Endothelial cell of umbilical vein (primary cell): ENCODE measurements at regions of chr6 and their contacts with region 1.

Region 1: GRCh38 chr6:2634139-2634964 is 116.4 kb downstream of the MYLK4 start:
- DNase-seq: peak; percentile 93
- H3K4me3 ChIP-seq: peak overlapping the region in 2 of 3 experiments; percentile 13 to 15
- H3K27ac ChIP-seq: peak overlapping the region; percentile 44
- H3K4me1 ChIP-seq: peaks cover 15% of the 10 kb centered on the region
- H3K27me3 ChIP-seq: no peaks in the 10 kb centered on the region
- CTCF ChIP-seq: peak; percentile 98 to 99
- POLR2A ChIP-seq: no peak

Region 2: DNA sequence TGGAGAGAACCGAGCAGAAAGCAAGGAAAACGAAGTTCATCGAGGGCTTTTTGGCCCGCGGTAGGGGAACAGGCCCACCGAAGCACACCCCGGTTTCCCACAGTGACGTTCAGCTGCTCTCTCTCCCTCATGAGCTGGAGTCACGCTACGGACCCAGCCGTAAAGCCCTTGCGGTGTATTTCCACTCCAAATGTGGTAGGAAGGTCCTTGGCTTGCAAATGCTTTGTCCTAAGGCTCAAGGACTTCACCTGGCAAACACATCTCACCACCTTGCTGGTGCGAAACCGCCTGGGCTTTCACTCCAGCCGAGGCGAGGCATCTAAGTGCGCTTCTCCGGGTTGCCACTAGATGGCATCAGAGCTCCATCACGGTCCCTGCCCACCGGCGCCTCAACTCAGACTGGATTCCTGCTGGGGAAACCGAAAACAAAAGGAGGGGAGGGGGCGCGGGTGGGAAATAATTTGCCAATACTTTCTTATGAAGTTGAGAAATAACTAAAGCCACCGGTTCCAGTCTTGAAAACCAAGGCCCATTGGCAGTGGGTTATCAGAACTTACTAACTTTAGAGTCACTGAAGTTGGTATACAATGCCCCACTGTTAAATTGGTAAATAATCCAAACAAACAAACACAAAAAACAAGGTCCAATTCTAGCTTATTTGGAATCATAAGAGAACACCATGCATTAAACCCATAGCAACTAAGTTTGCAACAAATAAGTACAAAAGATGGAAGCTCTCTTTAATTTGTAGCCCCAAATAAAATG is 1038.1 kb before region 1 on chr6:
- CTCF ChIA-PET with region 1: interaction called, 80 read pairs
- POLR2A ChIA-PET with region 1: no interaction called
- dilution Hi-C with region 1: no loop called
- intact Hi-C with region 1: loop called (anchors 1 kb)
- DNase-seq: peak; percentile 58
- H3K4me3 ChIP-seq: no peak overlapping the region
- H3K27ac ChIP-seq: no peak overlapping the region
- H3K4me1 ChIP-seq: no peaks in the 10 kb centered on the region
- H3K27me3 ChIP-seq: peaks cover 1 to 2% of the 10 kb centered on the region in 2 experiments
- CTCF ChIP-seq: peak; percentile 81 to 93
- POLR2A ChIP-seq: no peak

Region 3: GRCh38 chr6:1767481-1768251 is 866.7 kb before region 1 on chr6:
- CTCF ChIA-PET with region 1: no interaction called
- POLR2A ChIA-PET with region 1: no interaction called
- dilution Hi-C with region 1: no loop called
- intact Hi-C with region 1: loop called (anchors 5 kb)
- DNase-seq: peak; percentile 38
- H3K4me3 ChIP-seq: no peak overlapping the region
- H3K27ac ChIP-seq: no peak overlapping the region
- H3K4me1 ChIP-seq: peaks cover 53% of the 10 kb centered on the region
- H3K27me3 ChIP-seq: no peaks in the 10 kb centered on the region
- CTCF ChIP-seq: no peak
- POLR2A ChIP-seq: no peak

Region 4: DNA sequence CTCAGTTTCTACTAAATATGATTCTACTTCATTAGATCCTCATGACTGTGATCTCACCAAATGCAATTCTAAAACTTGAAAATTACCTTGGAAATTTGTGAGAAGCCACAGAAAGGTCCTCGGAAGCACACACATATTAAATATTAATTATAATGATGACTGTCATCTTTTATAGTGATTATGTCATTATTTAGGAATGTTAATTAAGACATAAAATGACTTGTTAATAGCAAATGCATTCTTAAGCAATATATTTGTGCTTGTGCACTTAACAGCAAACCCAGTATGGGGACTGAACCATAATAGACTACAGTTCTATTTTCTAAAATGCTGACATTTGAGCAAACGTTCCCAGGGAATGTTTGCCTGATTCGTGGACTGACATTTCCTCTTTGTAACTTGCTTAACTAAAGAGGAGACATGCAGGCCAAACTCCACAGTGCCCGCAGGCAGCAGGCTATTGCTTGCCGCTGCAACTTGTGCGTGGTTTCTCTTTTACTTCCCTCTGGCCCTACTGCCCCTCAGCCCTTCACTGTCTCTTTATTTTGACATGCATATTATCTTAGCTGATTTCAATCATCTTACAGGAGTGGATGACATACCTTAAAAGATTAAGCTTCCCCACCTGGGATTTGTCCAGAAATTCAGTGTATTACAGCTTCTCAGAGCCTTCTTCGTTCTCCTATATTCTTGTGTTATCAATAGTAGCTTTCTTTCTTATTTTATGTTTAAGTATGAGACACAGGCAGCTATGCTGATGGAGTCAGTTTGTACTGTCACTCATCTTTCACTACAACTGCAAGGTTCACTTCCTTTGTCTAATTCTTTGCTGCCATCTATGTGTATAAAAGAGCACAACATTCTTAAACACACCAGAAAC is 530.5 kb before region 1 on chr6:
- CTCF ChIA-PET with region 1: interaction called, 18 read pairs
- POLR2A ChIA-PET with region 1: no interaction called
- dilution Hi-C with region 1: loop called (anchors 25 kb)
- intact Hi-C with region 1: loop called (anchors 1 kb)
- DNase-seq: peak; percentile 84
- H3K4me3 ChIP-seq: peak overlapping the region in 2 of 3 experiments; percentile 1 to 47
- H3K27ac ChIP-seq: peak overlapping the region; percentile 46
- H3K4me1 ChIP-seq: peaks cover 21% of the 10 kb centered on the region
- H3K27me3 ChIP-seq: no peaks in the 10 kb centered on the region
- CTCF ChIP-seq: peak; percentile 37 to 40
- POLR2A ChIP-seq: no peak

Region 5: GRCh38 chr6:2245094-2245876 is 389.1 kb before region 1 on chr6 and contains the start of gene GMDS:
- CTCF ChIA-PET with region 1: interaction called, 5 read pairs
- POLR2A ChIA-PET with region 1: no interaction called
- dilution Hi-C with region 1: no loop called
- intact Hi-C with region 1: loop called (anchors 1 kb)
- DNase-seq: peak; percentile 90
- H3K4me3 ChIP-seq: peak within 1 kb of the TSS; percentile 23 to 91 (median 70)
- H3K27ac ChIP-seq: peak within 1 kb of the TSS; percentile 67
- H3K4me1 ChIP-seq: peaks cover 10% of the 10 kb centered on the region
- H3K27me3 ChIP-seq: no peaks in the 10 kb centered on the region
- CTCF ChIP-seq: no peak
- POLR2A ChIP-seq: peak; percentile 87
- total RNA-seq, gene GMDS: 23.5 TPM in 2 replicates

Region 6: DNA sequence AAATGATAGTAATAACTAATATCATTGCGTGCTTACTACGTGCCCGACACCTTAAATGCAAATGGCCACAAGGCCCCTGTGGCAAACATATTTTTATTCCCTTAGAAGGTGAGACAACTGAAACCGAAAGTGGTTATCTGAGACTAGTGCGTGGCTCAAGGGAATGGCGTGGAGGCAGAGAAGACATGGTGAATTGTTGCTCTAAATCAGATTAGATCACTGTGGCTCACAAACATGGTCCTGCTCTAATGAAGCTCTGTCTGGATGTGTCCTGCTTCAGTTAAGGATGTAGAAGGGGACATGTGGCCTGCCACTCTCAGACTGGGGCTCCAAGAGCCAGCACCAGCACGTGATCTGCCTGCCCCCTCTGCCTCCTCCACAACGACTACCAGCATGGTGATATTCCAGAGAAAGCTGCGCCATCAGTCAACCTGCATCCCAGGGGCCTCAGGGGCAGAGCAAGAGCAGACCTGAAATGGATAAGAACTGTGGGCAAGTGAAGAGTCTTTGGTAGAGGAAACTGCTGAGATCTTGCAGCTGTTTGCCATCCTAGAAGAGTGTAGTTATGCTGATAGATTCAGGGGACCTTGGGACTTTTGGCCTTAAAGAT is 264.6 kb before region 1 on chr6:
- CTCF ChIA-PET with region 1: no interaction called
- POLR2A ChIA-PET with region 1: no interaction called
- dilution Hi-C with region 1: no loop called
- intact Hi-C with region 1: no loop called
- DNase-seq: no peak
- H3K4me3 ChIP-seq: no peak overlapping the region
- H3K27ac ChIP-seq: no peak overlapping the region
- H3K4me1 ChIP-seq: no peaks in the 10 kb centered on the region
- H3K27me3 ChIP-seq: no peaks in the 10 kb centered on the region
- CTCF ChIP-seq: no peak
- POLR2A ChIP-seq: no peak

Region 7: DNA sequence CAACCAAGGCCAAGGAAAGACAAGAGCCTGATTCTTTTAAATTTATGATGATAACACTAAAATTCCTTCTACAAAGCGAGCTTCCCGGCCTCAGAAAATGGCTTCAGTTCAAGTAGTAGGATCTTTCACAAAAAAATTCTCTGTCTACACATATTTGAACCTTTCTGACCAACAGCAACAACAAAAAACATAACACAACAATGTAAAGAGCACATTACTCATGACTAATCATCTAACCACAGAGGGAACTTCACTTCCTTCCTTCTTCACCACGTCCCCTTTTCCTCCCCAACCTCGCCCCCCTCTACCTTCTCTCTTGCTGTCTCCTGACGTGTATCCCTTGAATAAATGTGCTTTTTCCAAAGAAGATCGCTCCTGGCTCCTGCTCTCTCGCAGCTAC is 111.8 kb before region 1 on chr6:
- CTCF ChIA-PET with region 1: interaction called, 6 read pairs
- POLR2A ChIA-PET with region 1: no interaction called
- dilution Hi-C with region 1: no loop called
- intact Hi-C with region 1: loop called (anchors 1 kb)
- DNase-seq: peak; percentile 64
- H3K4me3 ChIP-seq: no peak overlapping the region
- H3K27ac ChIP-seq: peak overlapping the region; percentile 54
- H3K4me1 ChIP-seq: peaks cover 12% of the 10 kb centered on the region
- H3K27me3 ChIP-seq: no peaks in the 10 kb centered on the region
- CTCF ChIP-seq: no peak
- POLR2A ChIP-seq: no peak

Region 8: DNA sequence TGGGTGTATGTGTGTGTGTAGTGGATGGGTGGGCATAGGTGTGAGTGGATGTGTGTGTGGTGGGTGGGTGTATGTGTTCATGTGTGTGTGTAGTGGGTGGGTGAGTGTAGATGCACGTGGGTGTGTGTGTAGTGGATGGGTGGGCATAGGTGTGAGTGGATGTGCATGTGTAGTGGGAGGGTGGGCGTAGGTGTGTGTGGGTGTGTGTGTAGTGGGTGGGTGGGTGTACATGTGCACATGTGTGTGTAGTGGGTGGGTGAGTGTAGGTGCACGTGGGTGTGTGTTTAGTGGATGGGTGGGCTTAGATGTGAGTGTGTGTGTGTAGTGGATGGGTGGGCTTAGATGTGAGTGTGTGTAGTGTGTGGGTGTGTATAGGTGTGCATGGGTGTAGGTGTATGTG is 12.0 kb after region 1 on chr6:
- CTCF ChIA-PET with region 1: interaction called, 16 read pairs
- POLR2A ChIA-PET with region 1: no interaction called
- dilution Hi-C with region 1: no loop called
- intact Hi-C with region 1: no loop called
- DNase-seq: no peak
- H3K4me3 ChIP-seq: no peak overlapping the region
- H3K27ac ChIP-seq: no peak overlapping the region
- H3K4me1 ChIP-seq: no peaks in the 10 kb centered on the region
- H3K27me3 ChIP-seq: peaks cover 0 to 13% of the 10 kb centered on the region in 2 experiments
- CTCF ChIP-seq: no peak
- POLR2A ChIP-seq: no peak